ENCODE measurements at regions of chr7 and their contacts with region 1.

Region 1: GRCh38 chr7:141729020-141729419 is 9.1 kb upstream of the SSBP1 start:
- DNase-seq: no peak
- ATAC-seq: no peak
- H3K4me3 ChIP-seq: no peak overlapping the region
- H3K27ac ChIP-seq: no peak overlapping the region
- H3K4me1 ChIP-seq: no peaks in the 10 kb centered on the region
- H3K27me3 ChIP-seq: no peaks in the 10 kb centered on the region
- CTCF ChIP-seq: no peak
- POLR2A ChIP-seq: no peak
- RAD21 ChIP-seq: no peak

Region 2: DNA sequence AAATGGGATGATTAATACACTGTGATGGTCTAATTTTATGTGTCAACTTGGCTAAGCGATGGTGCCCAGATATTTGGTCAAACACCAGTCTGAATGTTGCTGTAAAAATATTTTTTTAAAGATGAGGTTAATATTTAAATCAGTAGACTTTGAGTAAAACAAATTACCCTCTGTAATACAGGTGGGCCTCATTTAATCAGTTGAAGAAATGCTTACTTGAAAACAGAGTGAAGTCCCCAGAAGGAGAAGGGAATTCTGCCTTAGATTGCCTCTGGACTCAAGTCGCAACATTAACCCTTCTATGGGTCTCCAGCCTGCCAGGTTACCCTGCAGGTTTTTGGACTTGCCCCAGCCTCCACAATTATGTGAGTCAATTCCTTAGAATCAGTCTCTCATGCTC is 227.6 kb before region 1 on chr7:
- CTCF ChIA-PET with region 1: no interaction called
- POLR2A ChIA-PET with region 1: no interaction called
- dilution Hi-C with region 1: no loop called
- in situ Hi-C with region 1: no loop called
- intact Hi-C with region 1: no loop called
- DNase-seq: no peak
- ATAC-seq: no peak
- H3K4me3 ChIP-seq: no peak overlapping the region
- H3K27ac ChIP-seq: no peak overlapping the region
- H3K4me1 ChIP-seq: no peaks in the 10 kb centered on the region
- H3K27me3 ChIP-seq: no peaks in the 10 kb centered on the region; the same call in 1 of the 2 replicates
- CTCF ChIP-seq: no peak
- POLR2A ChIP-seq: no peak
- RAD21 ChIP-seq: no peak

Region 3: DNA sequence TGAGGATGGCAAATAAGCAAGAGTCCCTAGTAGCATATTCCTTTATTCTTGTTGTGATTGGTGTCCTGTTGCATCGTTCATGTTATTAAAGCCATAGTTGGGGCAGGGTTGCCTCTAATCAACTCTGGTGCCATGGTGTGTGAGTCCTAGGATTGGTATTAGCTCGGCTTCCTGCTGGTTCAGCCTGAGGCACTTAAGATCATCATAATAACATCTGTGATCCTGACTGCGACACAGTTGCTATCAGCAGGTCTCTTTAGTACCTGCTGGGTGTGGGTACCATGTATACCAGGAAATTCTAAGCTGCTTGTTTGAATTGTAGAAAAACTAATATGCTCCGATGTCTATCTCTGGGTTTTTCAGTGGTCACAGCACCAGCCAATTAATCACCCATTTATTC is 19.3 kb before region 1 on chr7:
- CTCF ChIA-PET with region 1: interaction called, 3 read pairs
- POLR2A ChIA-PET with region 1: no interaction called
- dilution Hi-C with region 1: no loop called
- in situ Hi-C with region 1: no loop called
- intact Hi-C with region 1: loop called (anchors 2 kb)
- DNase-seq: no peak
- ATAC-seq: no peak
- H3K4me3 ChIP-seq: no peak overlapping the region
- H3K27ac ChIP-seq: no peak overlapping the region
- H3K4me1 ChIP-seq: no peaks in the 10 kb centered on the region
- H3K27me3 ChIP-seq: no peaks in the 10 kb centered on the region
- CTCF ChIP-seq: no peak
- POLR2A ChIP-seq: no peak
- RAD21 ChIP-seq: no peak

Measured in IMR-90 (cell line).